Dendritic cell treated with granulocyte-macrophage colony-stimulating factor and Interleukin-4, amounts not matched to agents 40 ng/mL and 50 ng/mL, for 4 days (primary cell): ENCODE measurements at regions of chr6 and their contacts with region 1.

Region 1: GRCh38 chr6:32177788-32178546 is at the start of gene RNF5:
- H3K4me3 Mint-ChIP-seq: peak within 1 kb of the TSS; percentile 91
- H3K27ac Mint-ChIP-seq: peak within 1 kb of the TSS; percentile 86
- H3K4me1 Mint-ChIP-seq: peaks cover 84% of the 10 kb centered on the region
- H3K27me3 Mint-ChIP-seq: no peaks in the 10 kb centered on the region

Region 2: GRCh38 chr6:31945507-31946369 is 232.2 kb before region 1 on chr6 and contains the start of gene CFB:
- intact Hi-C with region 1: no loop called
- H3K4me3 Mint-ChIP-seq: peak within 1 kb of the TSS; percentile 52
- H3K27ac Mint-ChIP-seq: peak within 1 kb of the TSS; percentile 78
- H3K4me1 Mint-ChIP-seq: peaks cover 71% of the 10 kb centered on the region
- H3K27me3 Mint-ChIP-seq: peaks cover 34% of the 10 kb centered on the region

Region 3: DNA sequence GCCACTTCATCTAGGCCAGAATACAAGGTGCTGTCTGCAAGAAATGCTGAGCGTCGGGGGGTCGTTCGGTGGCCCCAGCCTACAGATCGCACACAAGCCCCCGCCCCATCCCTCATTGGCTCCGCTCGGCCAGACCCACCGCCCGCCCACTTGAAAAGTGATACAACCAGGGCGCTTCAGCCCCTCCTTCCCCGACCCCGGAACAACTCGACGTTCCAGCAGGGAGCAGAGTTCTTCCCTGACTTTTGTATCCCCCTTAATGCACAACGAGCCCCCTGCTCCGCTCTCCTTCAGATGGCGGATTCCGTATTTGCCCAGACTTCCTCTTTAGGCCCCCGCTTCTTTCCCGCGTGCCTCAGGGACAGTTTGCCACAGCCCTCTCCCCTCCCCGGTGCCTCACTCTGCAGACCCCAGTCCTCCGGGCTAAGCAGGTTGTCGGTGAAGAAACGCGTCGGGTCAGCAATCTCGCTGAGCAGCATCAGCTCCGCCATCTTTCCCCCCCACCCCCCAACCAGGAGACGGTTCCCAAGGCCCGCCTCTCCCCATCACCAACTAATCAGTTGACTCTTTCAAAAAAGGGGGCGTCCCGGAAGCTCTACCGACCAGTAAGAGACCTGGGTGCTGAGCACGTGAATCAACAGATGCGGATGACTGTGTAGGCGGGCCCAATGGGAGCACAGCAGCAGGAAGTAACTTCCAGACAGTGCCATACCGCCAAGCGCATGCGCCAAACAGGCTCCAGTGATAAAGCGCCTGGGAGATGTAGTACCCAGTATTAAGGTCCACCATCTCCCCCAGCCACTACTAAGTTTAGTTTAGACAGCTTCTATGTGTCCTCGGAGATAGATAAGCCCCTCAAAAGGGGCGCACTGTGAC is 50.0 kb before region 1 on chr6 and contains the start of gene ATF6B:
- intact Hi-C with region 1: loop called (anchors 5 kb)
- H3K4me3 Mint-ChIP-seq: peak within 1 kb of the TSS; percentile 98
- H3K27ac Mint-ChIP-seq: peak within 1 kb of the TSS; percentile 98
- H3K4me1 Mint-ChIP-seq: peaks cover 55% of the 10 kb centered on the region
- H3K27me3 Mint-ChIP-seq: peaks cover 2% of the 10 kb centered on the region

Region 4: GRCh38 chr6:32195652-32195901 is 17.6 kb after region 1 on chr6:
- intact Hi-C with region 1: loop called (anchors 1 kb)
- H3K4me3 Mint-ChIP-seq: peak overlapping the region; percentile 94
- H3K27ac Mint-ChIP-seq: peak overlapping the region; percentile 99
- H3K4me1 Mint-ChIP-seq: peaks cover 64% of the 10 kb centered on the region
- H3K27me3 Mint-ChIP-seq: peaks cover 5% of the 10 kb centered on the region

Region 5: DNA sequence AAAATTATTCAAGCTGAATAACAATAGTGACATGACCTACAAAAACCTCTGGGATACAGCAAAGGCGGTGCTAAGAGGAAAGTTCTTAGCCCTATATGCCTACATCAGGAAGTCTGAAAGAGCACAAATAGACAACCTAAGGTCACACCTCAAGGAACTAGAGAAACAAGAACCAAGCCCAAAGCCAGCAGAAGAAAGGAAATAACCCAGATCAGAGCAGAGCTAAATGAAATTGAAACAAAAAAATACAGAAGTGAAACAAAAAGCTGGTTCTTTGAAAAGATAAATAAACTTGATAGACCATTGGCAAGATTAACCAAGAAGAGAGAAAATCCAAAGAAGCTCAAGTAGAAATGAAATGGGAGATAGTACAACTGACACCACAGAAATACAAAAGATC is 93.5 kb after region 1 on chr6:
- intact Hi-C with region 1: no loop called
- H3K4me3 Mint-ChIP-seq: peak overlapping the region; percentile 56
- H3K27ac Mint-ChIP-seq: peak overlapping the region; percentile 75
- H3K4me1 Mint-ChIP-seq: peaks cover 43% of the 10 kb centered on the region
- H3K27me3 Mint-ChIP-seq: peaks cover 7% of the 10 kb centered on the region